Dorsolateral prefrontal cortex (tissue), 120 donors: ENCODE measurements at regions of chr2 and their contacts with region 1.

Region 1: DNA sequence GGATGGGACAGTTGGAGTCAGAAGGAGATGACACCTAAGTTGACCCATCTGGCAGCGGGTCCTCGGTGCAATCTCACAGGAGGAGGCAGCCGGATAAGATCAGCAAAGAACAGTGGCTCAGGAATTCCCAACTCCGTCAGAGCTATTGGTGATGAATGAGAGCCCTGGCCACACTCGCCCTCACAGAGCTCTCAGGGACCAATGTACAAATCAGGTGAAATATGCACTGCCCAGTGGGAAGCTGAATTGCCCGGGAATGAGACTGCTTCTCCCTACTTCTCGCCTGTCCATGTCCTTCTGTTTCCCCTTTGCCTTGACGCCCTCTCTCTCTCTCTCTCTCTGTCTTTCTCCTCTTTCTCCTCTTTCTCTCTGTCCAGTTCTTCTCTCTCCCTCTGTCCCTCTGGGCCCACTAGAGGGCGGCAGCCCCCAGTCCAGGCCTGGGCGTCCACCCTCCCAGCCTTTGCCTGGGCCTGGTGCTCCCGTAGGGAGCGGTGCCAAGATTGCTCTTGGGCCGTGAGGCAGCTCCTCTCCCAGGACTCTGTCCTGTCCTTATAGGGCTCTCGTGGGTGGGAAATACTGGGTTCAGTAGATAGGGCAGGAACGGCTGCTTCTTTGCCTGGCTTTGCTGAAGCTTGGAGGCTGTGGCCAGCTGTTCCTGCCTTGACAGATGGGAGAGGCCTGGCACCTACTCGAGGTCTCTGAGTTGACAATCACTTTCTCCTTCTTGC is 28.3 kb upstream of the PUM2 start:
- DNase-seq: peak; percentile 70 to 87 (median 80)
- H3K4me3 ChIP-seq: no peak overlapping the region
- H3K27ac ChIP-seq: peak overlapping the region in 32 of 59 donors; percentile 1 to 85 (median 54)
- H3K27me3 ChIP-seq: no peaks in the 10 kb centered on the region
- CTCF ChIP-seq: peak; percentile 31 to 93 (median 78)

Region 2: GRCh38 chr2:20350753-20351554 is 28.0 kb before region 1 on chr2 and contains the start of gene PUM2:
- intact Hi-C with region 1: loop called in 1 of 2 experiments (anchors 2 kb)
- DNase-seq: peak; percentile 86 to 98 (median 91)
- H3K4me3 ChIP-seq: peak within 1 kb of the TSS; percentile 75 to 97 (median 89)
- H3K27ac ChIP-seq: peak within 1 kb of the TSS; percentile 86 to 99 (median 96)
- H3K27me3 ChIP-seq: no peaks in the 10 kb centered on the region
- CTCF ChIP-seq: peak in 27 of 56 donors; percentile 1 to 42 (median 17)
- total RNA-seq, gene PUM2: 107 to 165 (median 131) TPM

Region 3: DNA sequence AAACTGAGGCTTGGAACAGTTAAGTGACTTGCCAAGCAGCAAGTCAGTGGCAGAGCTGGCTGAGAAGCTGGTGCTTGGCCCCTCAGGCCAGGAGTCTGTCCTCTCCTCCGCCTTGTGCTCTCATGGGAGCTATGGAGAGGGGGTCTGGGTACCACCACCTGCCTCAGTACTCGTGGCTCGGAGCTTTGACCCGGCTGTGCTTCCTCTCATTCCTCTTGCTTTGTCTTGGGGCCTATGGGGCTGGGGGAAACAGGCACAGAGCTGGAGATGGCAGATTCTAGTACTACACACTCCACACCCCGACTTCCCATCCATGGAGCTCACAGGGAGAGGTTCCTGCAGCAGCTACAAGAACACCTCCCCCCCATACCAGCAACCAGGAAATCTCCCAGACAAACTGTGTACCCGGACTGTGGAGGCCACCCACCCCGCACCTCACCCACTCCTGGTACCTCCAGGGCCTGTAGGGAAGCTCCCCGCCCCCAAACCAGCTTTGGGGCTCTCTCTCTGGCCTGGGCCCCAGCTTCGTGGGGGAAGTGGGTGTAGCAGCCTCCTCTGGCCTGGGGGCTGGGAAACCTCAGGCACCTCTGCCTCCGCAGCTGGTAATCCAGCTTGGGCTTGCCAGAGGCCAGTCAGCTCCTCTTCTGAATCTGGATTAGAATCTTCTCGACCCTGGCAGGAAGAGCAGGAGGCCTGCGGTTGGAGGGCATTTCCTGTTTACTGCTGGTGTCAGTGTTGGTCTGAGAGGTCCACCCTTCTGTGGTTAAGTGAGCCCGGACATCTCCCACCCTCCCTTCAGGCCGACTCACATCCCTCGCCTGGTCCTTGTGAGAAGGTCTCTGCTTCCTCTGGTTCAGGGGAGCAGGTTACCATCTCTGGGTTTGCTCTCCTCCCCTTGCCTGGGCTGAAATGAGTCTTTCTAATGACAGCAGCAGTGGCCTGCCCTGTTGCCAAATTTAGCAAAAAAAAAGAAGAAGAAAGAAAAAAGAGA is 45.6 kb after region 1 on chr2:
- intact Hi-C with region 1: loop called (anchors 2 to 5 kb)
- DNase-seq: peak in 5 of 10 donors; percentile 31 to 49 (median 42)
- H3K4me3 ChIP-seq: no peak overlapping the region
- H3K27ac ChIP-seq: peak overlapping the region in 45 of 59 donors; percentile 5 to 82 (median 53)
- H3K27me3 ChIP-seq: no peaks in the 10 kb centered on the region
- CTCF ChIP-seq: no peak

Region 4: GRCh38 chr2:20642055-20642971 is 263.4 kb after region 1 on chr2:
- intact Hi-C with region 1: loop called in 1 of 2 experiments (anchors 2 kb)
- DNase-seq: peak; percentile 72 to 91 (median 84)
- H3K4me3 ChIP-seq: peak overlapping the region in 5 of 59 donors; percentile 2 to 17 (median 8)
- H3K27ac ChIP-seq: peak overlapping the region in 48 of 59 donors; percentile 10 to 85 (median 64)
- H3K27me3 ChIP-seq: no peaks in the 10 kb centered on the region
- CTCF ChIP-seq: peak; percentile 54 to 98 (median 94)